ENCODE measurements at regions of chr6 and their contacts with region 1.

Region 1: DNA sequence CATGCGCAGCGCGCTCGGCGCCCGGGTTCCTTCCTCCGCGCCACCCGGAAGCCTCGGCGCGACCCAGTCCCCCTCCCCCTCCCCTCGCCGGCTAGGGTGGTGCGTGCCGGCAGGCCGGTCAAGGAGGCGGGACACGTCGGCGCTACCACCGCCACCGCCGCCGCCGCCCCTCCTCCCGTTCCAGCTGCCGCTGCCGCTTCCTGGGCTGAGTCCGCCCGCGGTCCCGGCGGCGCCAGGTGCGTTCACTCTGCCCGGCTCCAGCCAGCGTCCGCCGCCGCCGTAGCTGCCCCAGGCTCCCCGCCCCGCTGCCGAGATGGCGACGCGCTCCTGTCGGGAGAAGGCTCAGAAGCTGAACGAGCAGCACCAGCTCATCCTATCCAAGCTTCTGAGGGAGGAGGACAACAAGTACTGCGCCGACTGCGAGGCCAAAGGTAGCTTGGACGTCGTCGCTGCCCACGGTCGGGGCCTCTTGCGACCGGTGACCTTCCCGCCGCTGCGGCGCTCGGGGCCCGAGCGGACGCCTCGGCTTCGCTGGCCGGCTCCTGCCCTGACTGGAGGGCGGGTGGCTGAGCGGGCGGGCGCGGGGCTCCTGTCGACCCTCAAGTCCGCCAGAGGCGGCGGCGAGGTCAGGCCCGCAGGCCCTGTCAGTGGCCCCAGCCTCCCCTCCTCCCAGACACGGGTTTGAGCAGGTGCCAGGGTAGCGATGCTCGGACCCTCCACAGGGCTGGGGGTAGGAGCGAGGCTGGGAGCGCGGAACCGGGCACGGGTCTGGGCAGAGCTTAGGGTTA is at the start of gene SMAP1:
- DNase-seq: peak; percentile 96 to 97
- H3K4me3 ChIP-seq: peak within 1 kb of the TSS; percentile 73 to 97 (median 92)
- H3K27ac ChIP-seq: peak within 1 kb of the TSS; percentile 76 to 90 (median 78)
- H3K4me1 ChIP-seq: peaks cover 18 to 27% of the 10 kb centered on the region in 2 donors
- H3K27me3 ChIP-seq: no peaks in the 10 kb centered on the region
- CTCF ChIP-seq: peak in 1 of 6 experiments; percentile 2
- POLR2A ChIP-seq: peak in 1 of 2 donors; percentile 86
- total RNA-seq, gene SMAP1: 27.3 to 33.9 (median 32.4) TPM

Region 2: DNA sequence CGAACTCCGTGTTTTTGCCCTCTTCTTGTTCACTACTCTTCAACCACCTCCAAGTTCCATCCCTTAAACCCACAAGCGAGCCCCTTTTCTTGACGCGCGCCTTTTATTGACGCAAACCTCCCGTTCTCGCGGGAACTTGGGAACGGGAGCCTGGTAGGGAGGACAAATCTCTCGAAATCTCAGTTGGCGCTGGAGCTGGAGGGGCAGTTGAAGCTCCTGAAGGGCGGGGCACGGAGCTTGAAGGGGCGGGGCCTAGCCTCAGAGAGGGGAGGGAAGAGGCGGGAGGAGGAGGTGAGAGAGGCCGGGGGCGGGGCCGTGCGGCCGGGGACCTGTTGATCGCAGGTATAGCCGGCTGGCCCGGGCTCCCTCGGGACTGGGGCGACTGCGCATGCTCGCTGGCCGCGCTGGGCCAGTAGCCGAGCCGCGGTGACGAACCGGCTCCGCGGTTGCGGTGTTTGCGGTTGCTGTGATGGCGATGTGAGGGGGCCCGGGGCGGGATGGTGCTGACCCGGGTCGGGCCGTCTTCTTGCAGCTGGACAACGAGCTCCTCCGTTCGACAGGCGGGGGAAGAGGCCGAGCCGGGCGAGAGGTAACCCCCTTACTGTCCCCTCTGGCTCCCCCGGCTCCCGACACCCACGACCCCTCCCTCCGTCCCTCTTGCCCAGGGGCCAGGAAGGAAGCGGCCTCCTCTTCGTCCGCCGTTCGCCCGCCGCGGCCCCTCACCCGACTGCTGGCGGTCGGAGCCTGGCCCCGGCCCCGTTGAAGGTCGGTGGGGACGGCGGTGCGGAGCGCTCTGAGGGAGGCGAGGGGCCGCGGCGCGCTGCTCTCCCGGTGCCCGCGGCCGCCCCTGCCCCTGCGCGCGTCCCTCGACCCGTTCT is 254.6 kb before region 1 on chr6 and contains the start of gene FAM135A:
- intact Hi-C with region 1: loop called (anchors 10 kb)
- DNase-seq: peak; percentile 99
- H3K4me3 ChIP-seq: peak within 1 kb of the TSS; percentile 79 to 91 (median 89)
- H3K27ac ChIP-seq: peak within 1 kb of the TSS in 2 of 3 donors; percentile 63 to 86
- H3K4me1 ChIP-seq: peaks cover 7 to 14% of the 10 kb centered on the region in 2 donors
- H3K27me3 ChIP-seq: no peaks in the 10 kb centered on the region
- CTCF ChIP-seq: no peak
- POLR2A ChIP-seq: peak in 1 of 2 donors; percentile 80
- total RNA-seq, gene FAM135A: 17.0 to 42.9 (median 27.3) TPM